ENCODE measurements at regions of chr6 and their contacts with region 1.

Region 1: DNA sequence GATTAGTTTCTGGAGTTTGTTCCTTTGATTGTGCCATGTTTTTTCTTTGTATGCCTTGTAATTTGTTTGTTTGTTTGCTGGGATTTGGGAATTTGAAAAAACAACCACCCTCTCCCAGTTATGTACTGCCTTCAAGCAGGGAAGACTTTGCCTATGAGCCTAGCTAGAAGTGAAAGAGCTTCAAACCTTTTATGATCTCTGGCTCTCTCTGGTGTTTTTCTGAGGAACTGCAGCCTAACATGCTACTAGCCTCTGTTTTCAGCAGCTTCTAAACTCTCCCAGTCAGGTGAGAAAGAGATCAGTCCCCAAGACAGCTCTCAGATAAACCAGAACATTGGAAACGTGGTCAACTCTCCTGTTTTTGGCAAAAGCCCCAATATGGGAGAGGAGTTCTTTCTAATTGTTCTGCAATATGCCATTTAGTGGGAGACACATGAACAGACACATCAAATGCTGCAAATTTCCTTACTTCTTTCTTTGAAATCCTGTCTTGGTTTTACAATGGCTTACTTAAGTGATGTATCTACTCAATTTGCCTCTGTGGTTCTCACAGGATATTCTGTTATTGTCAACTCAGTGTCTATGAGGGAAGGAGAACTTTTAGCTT is 58.9 kb upstream of the SERINC1 start:
- DNase-seq: peak in 31 of 35 experiments; percentile 2 to 78 (median 35)
- ATAC-seq: peak; percentile 65 to 85 (median 73)
- H3K4me3 ChIP-seq: no peak overlapping the region
- H3K4me3 Mint-ChIP-seq: no peak overlapping the region
- H3K27ac ChIP-seq: no peak overlapping the region
- H3K27ac Mint-ChIP-seq: no peak overlapping the region
- H3K4me1 ChIP-seq: no peaks in the 10 kb centered on the region
- H3K4me1 Mint-ChIP-seq: peaks cover 0 to 6% (median 2%) of the 10 kb centered on the region in 3 donors
- H3K27me3 ChIP-seq: peaks cover 0 to 4% of the 10 kb centered on the region in 2 experiments
- H3K27me3 Mint-ChIP-seq: peaks cover 22 to 25% of the 10 kb centered on the region in 2 donors

Region 2: GRCh38 chr6:120894077-120894476 is 1636.5 kb before region 1 on chr6:
- CTCF ChIA-PET with region 1: interaction called in 1 of 2 experiments, 10 read pairs
- POLR2A ChIA-PET with region 1: no interaction called
- DNase-seq: no peak
- ATAC-seq: no peak
- H3K4me3 ChIP-seq: no peak overlapping the region
- H3K4me3 Mint-ChIP-seq: no peak overlapping the region
- H3K27ac ChIP-seq: no peak overlapping the region
- H3K27ac Mint-ChIP-seq: no peak overlapping the region
- H3K4me1 ChIP-seq: no peaks in the 10 kb centered on the region
- H3K4me1 Mint-ChIP-seq: no peaks in the 10 kb centered on the region
- H3K27me3 ChIP-seq: no peaks in the 10 kb centered on the region
- H3K27me3 Mint-ChIP-seq: no peaks in the 10 kb centered on the region

Region 3: GRCh38 chr6:121055572-121056163 is 1474.9 kb before region 1 on chr6:
- CTCF ChIA-PET with region 1: interaction called in 1 of 2 experiments, 11 read pairs
- POLR2A ChIA-PET with region 1: no interaction called
- DNase-seq: peak in 2 of 35 experiments; percentile 12 to 48
- ATAC-seq: peak in 1 of 4 experiments; percentile 34
- H3K4me3 ChIP-seq: no peak overlapping the region
- H3K4me3 Mint-ChIP-seq: no peak overlapping the region
- H3K27ac ChIP-seq: no peak overlapping the region
- H3K27ac Mint-ChIP-seq: no peak overlapping the region
- H3K4me1 ChIP-seq: no peaks in the 10 kb centered on the region
- H3K4me1 Mint-ChIP-seq: no peaks in the 10 kb centered on the region
- H3K27me3 ChIP-seq: no peaks in the 10 kb centered on the region
- H3K27me3 Mint-ChIP-seq: no peaks in the 10 kb centered on the region

Region 4: GRCh38 chr6:122381497-122382265 is 148.9 kb before region 1 on chr6:
- CTCF ChIA-PET with region 1: interaction called, 19 to 86 read pairs
- POLR2A ChIA-PET with region 1: interaction called in 1 of 2 experiments, 3 read pairs
- DNase-seq: peak in 34 of 35 experiments; percentile 27 to 83 (median 54)
- ATAC-seq: peak; percentile 87 to 99 (median 92)
- H3K4me3 ChIP-seq: no peak overlapping the region
- H3K4me3 Mint-ChIP-seq: no peak overlapping the region
- H3K27ac ChIP-seq: no peak overlapping the region
- H3K27ac Mint-ChIP-seq: no peak overlapping the region
- H3K4me1 ChIP-seq: peaks cover 0 to 2% of the 10 kb centered on the region in 2 experiments
- H3K4me1 Mint-ChIP-seq: peaks cover 4 to 10% (median 7%) of the 10 kb centered on the region in 3 donors
- H3K27me3 ChIP-seq: no peaks in the 10 kb centered on the region
- H3K27me3 Mint-ChIP-seq: peaks cover 10 to 14% of the 10 kb centered on the region in 2 donors

Region 5: GRCh38 chr6:122471107-122472021 is 59.2 kb before region 1 on chr6 and contains the start of gene SERINC1:
- CTCF ChIA-PET with region 1: interaction called, 8 to 26 read pairs
- POLR2A ChIA-PET with region 1: interaction called in 1 of 2 experiments, 3 read pairs
- DNase-seq: peak; percentile 84 to 97 (median 93)
- ATAC-seq: peak; percentile 94 to 97 (median 96)
- H3K4me3 ChIP-seq: peak within 1 kb of the TSS; percentile 98 to 100
- H3K4me3 Mint-ChIP-seq: peak within 1 kb of the TSS; percentile 99 to 100 (median 100)
- H3K27ac ChIP-seq: peak within 1 kb of the TSS; percentile 99
- H3K27ac Mint-ChIP-seq: peak within 1 kb of the TSS; percentile 99 to 100
- H3K4me1 ChIP-seq: peaks cover 22 to 24% of the 10 kb centered on the region in 2 experiments
- H3K4me1 Mint-ChIP-seq: peaks cover 40 to 49% (median 46%) of the 10 kb centered on the region in 3 donors
- H3K27me3 ChIP-seq: no peaks in the 10 kb centered on the region
- H3K27me3 Mint-ChIP-seq: no peaks in the 10 kb centered on the region
- total RNA-seq, gene SERINC1: 110 to 121 (median 116) TPM

Region 6: DNA sequence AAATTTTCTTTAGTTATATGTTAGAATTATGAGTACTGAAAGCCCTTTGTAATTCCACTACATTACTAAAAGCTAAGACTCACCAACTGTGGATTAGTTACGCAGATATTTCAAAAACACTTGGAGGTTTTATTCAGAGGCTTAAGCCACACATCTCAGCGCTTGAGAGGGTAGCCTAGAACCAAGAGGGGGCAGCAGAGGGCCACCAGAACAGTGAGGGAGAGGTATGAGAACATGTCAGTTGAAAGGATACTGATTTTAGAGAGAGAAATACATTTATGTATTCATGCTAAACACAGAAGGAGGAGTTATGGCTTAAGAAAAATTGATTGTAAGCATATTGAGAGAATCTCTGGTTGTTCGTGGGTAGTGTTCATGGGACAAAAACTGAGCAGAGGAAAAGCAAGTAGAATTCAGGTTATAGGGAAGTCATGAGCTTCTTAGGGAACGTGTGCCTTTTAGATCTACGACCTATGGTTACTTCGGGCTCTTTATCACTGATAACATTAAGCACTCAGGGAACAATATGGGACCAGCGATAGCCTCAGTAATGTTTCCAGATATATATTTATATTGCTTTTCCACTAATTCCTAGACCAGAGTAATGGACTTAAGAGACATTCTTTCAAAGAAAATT is 38.5 kb before region 1 on chr6:
- CTCF ChIA-PET with region 1: interaction called, 68 to 127 read pairs
- POLR2A ChIA-PET with region 1: no interaction called
- DNase-seq: peak; percentile 33 to 77 (median 62)
- ATAC-seq: peak; percentile 89 to 100 (median 97)
- H3K4me3 ChIP-seq: no peak overlapping the region
- H3K4me3 Mint-ChIP-seq: no peak overlapping the region
- H3K27ac ChIP-seq: no peak overlapping the region
- H3K27ac Mint-ChIP-seq: no peak overlapping the region
- H3K4me1 ChIP-seq: peaks cover 0 to 5% of the 10 kb centered on the region in 2 experiments
- H3K4me1 Mint-ChIP-seq: peaks cover 7 to 17% (median 12%) of the 10 kb centered on the region in 3 donors
- H3K27me3 ChIP-seq: peaks cover 0 to 12% of the 10 kb centered on the region in 2 experiments
- H3K27me3 Mint-ChIP-seq: peaks cover 0 to under 1% of the 10 kb centered on the region in 2 donors

Measured in T-cell (primary cell).